ENCODE measurements at regions of chr2 and their contacts with region 1.

Region 1: GRCh38 chr2:102141970-102142828 is at the start of gene IL1R1:
- DNase-seq: no peak
- H3K4me3 Mint-ChIP-seq: peak within 1 kb of the TSS; percentile 73
- H3K27ac Mint-ChIP-seq: peak within 1 kb of the TSS; percentile 74
- H3K4me1 Mint-ChIP-seq: peaks cover 41% of the 10 kb centered on the region
- H3K27me3 Mint-ChIP-seq: peaks cover 34% of the 10 kb centered on the region
- total RNA-seq, gene IL1R1: 5.7 to 6.7 TPM

Region 2: DNA sequence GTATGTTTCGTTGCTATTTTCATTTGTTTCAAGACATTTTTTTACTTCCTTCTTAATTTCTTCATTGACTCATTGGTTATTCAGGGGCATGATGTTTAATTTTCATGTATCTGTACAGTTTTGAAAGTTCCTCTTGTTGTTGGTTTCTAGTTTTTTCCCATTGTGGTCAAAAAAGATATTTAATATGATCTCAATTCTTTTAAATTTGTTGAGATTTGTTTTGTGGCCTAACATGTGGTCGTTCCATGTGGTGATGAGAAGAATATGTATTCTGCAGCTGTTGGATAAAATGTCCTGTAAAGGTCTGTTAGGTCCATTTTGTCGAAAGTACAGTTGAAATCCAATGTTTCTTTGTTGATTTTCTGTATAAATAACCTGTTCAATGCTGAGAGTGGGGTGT is 554.9 kb before region 1 on chr2:
- CTCF ChIA-PET with region 1: no interaction called
- intact Hi-C with region 1: no loop called
- DNase-seq: no peak
- H3K4me3 Mint-ChIP-seq: no peak overlapping the region
- H3K27ac Mint-ChIP-seq: no peak overlapping the region
- H3K4me1 Mint-ChIP-seq: no peaks in the 10 kb centered on the region
- H3K27me3 Mint-ChIP-seq: no peaks in the 10 kb centered on the region

Region 3: DNA sequence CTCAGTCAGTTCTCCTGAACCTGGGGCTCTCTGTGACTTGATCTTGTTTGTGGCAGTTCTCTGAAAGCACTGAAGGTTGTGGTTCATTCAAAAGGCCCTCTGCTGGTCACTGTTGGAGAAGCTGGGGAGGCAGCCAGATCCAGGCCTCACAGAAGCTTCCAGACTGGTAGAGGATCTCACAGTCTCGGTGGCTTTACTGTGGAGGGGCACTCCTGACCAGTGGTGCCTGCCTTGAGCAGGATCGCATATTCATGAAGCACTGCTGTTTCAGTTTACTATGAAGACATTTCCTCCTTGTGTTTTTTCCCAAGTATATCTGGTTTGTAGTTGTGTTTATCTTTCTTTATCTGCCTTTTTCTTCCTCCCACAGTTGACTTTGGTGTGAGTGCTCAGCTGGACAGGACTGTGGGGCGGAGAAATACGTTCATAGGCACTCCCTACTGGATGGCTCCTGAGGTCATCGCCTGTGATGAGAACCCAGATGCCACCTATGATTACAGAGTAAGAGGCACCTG is 310.8 kb before region 1 on chr2:
- CTCF ChIA-PET with region 1: no interaction called
- intact Hi-C with region 1: no loop called
- DNase-seq: peak; percentile 76
- H3K4me3 Mint-ChIP-seq: peak overlapping the region; percentile 7
- H3K27ac Mint-ChIP-seq: peak overlapping the region; percentile 87
- H3K4me1 Mint-ChIP-seq: peaks cover 55% of the 10 kb centered on the region
- H3K27me3 Mint-ChIP-seq: no peaks in the 10 kb centered on the region

Region 4: GRCh38 chr2:102057502-102058292 is 84.5 kb before region 1 on chr2:
- CTCF ChIA-PET with region 1: no interaction called
- intact Hi-C with region 1: loop called (anchors 1 kb)
- DNase-seq: peak; percentile 64
- H3K4me3 Mint-ChIP-seq: no peak overlapping the region
- H3K27ac Mint-ChIP-seq: no peak overlapping the region
- H3K4me1 Mint-ChIP-seq: peaks cover 22% of the 10 kb centered on the region
- H3K27me3 Mint-ChIP-seq: no peaks in the 10 kb centered on the region

Region 5: DNA sequence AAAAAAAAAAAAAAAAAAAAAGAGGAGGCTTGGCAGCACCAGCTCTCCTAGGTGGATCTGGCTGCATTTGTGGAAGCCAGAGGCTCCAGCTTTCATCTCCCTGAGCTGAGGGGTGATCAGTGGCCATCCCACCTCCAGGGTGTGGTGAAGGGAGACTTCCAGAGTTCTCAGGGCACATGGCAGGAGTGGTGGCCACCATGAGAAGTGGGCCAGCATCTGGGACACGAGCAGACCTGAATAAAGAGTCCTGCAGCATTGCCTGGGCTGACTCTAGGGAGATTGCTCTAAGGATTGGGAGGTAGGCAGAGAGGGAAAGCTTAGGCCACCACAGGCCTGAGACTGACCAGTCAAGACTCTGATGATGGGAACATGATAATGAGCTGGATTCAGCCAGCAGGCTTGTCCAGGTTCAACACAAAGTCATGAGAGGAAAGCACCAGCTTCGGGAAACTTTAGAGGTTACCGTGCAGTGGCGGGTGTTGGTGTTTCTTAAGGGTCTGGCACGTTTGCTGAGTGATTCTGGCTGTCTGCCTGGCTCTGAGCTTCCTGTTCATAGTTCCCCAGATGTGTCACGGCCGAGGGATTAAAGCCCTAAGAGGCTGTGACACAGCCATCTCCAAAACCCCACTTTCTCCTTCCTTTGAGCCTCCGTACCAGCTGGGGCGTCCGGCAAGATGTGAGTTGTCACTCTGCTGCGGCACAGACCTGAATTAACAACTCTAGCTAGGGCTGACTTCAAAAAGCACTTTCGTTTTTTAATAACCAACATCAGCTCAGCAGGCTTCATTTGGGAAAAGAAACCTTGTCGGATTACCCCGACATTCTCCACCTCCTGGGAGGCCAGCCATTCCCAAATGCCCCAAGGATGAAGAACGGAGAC is 38.0 kb before region 1 on chr2:
- CTCF ChIA-PET with region 1: interaction called, 4 read pairs
- intact Hi-C with region 1: loop called (anchors 1 kb)
- DNase-seq: peak; percentile 96
- H3K4me3 Mint-ChIP-seq: peak overlapping the region; percentile 71
- H3K27ac Mint-ChIP-seq: peak overlapping the region; percentile 86
- H3K4me1 Mint-ChIP-seq: peaks cover 36% of the 10 kb centered on the region
- H3K27me3 Mint-ChIP-seq: peaks cover 2% of the 10 kb centered on the region